Sigmoid colon (tissue), 7 donors: ENCODE measurements at regions of chr3 and their contacts with region 1.

Region 1: DNA sequence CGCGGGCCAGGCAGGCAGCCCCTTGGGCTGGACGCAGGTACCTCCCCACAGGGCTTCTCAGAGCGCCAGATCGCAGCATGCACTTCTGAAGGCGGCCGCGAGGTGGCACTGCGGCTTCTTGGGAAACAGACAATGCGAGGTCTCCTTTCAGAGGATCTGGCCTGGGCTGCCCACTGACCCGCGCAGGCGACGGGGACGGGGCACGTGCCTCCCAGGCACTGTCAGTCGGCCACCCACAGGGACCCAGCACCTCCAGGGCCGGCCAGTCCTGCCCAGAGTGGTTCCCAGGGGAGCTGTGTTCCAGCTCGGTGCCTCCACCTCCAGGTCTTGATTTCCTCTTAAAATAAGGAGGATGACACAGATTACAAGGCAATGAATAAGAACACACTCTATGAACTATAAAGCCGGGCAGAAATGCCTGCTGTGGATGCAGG is 24.4 kb upstream of the TXNRD3 start:
- DNase-seq: peak; percentile 87
- H3K4me3 ChIP-seq: no peak overlapping the region
- H3K27ac ChIP-seq: no peak overlapping the region
- H3K4me1 ChIP-seq: peaks cover 0 to 7% (median 3%) of the 10 kb centered on the region in 4 donors
- H3K27me3 ChIP-seq: peaks cover 0 to 12% (median 0%) of the 10 kb centered on the region in 3 donors
- CTCF ChIP-seq: peak; percentile 78 to 97 (median 85)
- EP300 ChIP-seq: no peak
- POLR2A ChIP-seq: no peak

Region 2: GRCh38 chr3:126056681-126057546 is 622.4 kb before region 1 on chr3:
- intact Hi-C with region 1: no loop called
- DNase-seq: no peak
- H3K4me3 ChIP-seq: no peak overlapping the region
- H3K27ac ChIP-seq: no peak overlapping the region
- H3K4me1 ChIP-seq: no peaks in the 10 kb centered on the region
- H3K27me3 ChIP-seq: no peaks in the 10 kb centered on the region
- CTCF ChIP-seq: no peak
- EP300 ChIP-seq: no peak
- POLR2A ChIP-seq: no peak

Region 3: DNA sequence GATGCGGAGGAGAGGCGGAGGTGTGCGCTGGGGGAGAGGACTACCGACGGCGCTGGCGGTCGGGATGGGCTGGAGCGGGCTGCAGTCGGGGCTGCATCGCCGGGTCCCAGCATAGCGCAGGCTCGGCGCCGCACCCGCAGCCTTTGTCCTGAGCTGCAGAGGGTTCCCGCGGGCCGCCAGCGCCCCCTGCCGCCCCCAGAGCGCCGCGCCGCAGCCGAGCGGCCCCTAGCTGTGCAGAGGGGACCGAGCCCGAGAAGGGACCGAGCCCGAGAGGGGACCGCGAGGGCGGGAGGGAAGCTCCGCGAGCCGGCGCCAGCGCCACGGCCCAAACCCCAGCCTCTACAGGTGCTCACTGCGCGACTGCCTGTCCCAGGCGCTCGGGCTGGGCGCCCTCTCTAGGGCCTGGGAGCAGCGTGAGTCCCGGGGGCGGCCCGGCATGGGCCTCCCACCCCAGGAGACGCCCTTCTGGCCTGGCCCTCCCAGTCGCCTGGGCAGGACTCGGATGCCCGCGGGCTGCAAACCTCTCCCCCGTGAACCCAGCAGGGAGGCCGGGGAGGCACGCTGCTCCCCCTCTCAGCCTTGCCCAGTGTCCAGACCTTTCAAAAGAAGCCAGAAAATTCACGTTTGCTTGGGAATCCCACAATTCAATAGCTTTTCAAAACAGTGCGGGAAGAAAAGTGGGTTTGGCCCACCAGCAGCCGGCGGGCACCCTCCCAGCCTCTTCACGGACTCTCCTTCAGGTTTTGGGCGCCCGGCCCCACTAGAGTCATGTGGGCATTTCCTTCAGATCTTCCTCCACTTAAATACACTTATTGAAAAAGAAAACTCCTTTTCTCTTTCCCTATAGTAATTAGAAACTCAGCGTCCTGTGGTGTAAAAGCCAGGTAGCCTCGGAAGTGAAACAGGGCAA is 776.5 kb after region 1 on chr3:
- intact Hi-C with region 1: loop called (anchors 2 kb)
- DNase-seq: peak; percentile 72
- H3K4me3 ChIP-seq: peak overlapping the region in 2 of 4 donors; percentile 11 to 34
- H3K27ac ChIP-seq: no peak overlapping the region
- H3K4me1 ChIP-seq: peaks cover 0 to 24% (median 24%) of the 10 kb centered on the region in 4 donors
- H3K27me3 ChIP-seq: peaks cover 30 to 81% (median 49%) of the 10 kb centered on the region in 3 donors
- CTCF ChIP-seq: peak; percentile 28 to 86 (median 58)
- EP300 ChIP-seq: no peak
- POLR2A ChIP-seq: no peak

Region 4: DNA sequence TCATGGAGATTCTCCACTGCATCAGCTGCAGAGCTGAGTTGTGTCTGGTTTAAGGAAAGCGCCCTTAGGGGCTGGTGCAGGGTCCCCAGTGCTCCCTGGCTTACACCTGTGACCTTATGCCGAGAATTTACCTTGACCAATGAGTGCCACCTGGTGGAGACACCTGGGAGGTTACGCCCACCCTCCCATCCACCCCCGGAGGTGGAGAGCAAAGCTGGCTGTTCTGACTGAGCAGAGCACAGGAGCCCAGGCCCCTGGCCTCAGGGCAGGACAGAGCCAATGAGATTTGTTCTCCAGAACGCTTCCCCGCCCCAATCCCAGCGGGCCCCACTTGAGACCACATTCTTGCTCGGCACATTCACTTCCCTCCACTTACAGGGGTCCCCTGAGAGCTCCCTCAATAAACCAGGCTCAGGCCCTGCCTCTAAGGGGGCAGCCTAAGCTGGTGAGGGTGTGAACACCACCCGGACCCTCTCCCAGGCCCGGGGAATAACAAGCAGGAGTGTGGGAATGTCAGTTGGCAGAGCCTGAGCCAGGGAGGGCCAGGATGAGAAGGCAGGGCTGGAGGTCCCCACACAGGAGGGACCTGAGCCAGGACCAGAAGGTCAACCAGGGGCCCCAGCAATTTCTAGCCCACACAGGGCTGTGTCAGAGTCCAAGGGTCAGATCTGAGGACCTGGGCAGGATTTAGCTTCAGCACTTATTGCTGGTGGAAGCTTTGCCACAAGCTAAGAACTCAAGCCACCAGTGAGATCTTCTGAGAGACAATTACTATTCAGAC is 794.1 kb after region 1 on chr3:
- intact Hi-C with region 1: no loop called
- DNase-seq: no peak
- H3K4me3 ChIP-seq: no peak overlapping the region
- H3K27ac ChIP-seq: no peak overlapping the region
- H3K4me1 ChIP-seq: no peaks in the 10 kb centered on the region
- H3K27me3 ChIP-seq: peaks cover 0 to 3% (median 0%) of the 10 kb centered on the region in 3 donors
- CTCF ChIP-seq: no peak
- EP300 ChIP-seq: no peak
- POLR2A ChIP-seq: no peak